Activated CD8-positive, alpha-beta T cell treated with anti-CD3 and anti-CD28 coated beads, Interleukin-2, amount 10 ng/mL, durations not matched to agents 7 days and 5 days (primary cell): ENCODE measurements at regions of chr10 and their contacts with region 1.

Region 1: GRCh38 chr10:71696628-71697326 is 22.8 kb downstream of the C10orf105 start:
- DNase-seq: peak; percentile 72
- ATAC-seq: peak; percentile 67
- H3K4me3 Mint-ChIP-seq: no peak overlapping the region
- H3K27ac Mint-ChIP-seq: peak overlapping the region; percentile 52
- H3K4me1 Mint-ChIP-seq: peaks cover 68% of the 10 kb centered on the region
- H3K27me3 Mint-ChIP-seq: no peaks in the 10 kb centered on the region

Region 2: DNA sequence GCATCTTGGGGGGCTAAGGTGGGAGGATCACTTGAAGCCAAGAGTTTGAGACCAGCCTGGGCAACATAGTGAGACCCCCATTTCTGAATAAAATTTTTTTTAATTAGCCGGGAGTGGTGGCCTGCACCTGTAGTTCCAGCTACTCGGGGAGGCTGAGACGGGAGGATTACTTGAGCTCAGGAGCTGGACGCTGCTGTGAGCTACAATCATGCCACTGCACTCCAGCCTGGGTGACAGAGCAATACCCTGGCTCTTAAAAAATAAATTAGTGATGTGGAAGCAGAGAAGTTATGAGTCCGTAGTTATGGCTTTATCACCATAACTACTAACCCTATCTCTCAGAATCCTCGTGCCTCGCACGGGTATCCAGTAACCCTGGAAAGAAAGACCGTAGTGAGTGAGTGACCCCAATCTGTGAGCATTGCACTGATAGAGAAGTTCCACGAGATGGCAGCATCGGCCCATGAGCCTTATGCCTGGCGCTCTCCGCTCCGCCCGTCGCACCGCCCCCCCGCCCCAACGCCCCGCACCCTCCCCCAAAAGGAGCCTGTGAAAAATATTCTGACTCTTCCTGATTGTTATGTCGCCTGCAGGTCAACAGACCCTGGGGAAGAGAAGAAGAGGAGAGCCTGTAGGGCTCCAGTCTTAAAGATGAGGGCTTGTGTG is 382.6 kb before region 1 on chr10:
- CTCF ChIA-PET with region 1: interaction called, 29 read pairs
- POLR2A ChIA-PET with region 1: no interaction called
- DNase-seq: peak; percentile 58
- ATAC-seq: peak; percentile 23
- H3K4me3 Mint-ChIP-seq: no peak overlapping the region
- H3K27ac Mint-ChIP-seq: no peak overlapping the region
- H3K4me1 Mint-ChIP-seq: peaks cover 19% of the 10 kb centered on the region
- H3K27me3 Mint-ChIP-seq: peaks cover 8% of the 10 kb centered on the region

Region 3: GRCh38 chr10:71383972-71384687 is 312.6 kb before region 1 on chr10:
- CTCF ChIA-PET with region 1: interaction called, 10 read pairs
- POLR2A ChIA-PET with region 1: no interaction called
- DNase-seq: peak; percentile 77
- ATAC-seq: peak; percentile 95
- H3K4me3 Mint-ChIP-seq: no peak overlapping the region
- H3K27ac Mint-ChIP-seq: no peak overlapping the region
- H3K4me1 Mint-ChIP-seq: no peaks in the 10 kb centered on the region
- H3K27me3 Mint-ChIP-seq: peaks cover 9% of the 10 kb centered on the region

Region 4: GRCh38 chr10:71708301-71708703 is 11.5 kb after region 1 on chr10:
- CTCF ChIA-PET with region 1: interaction called, 121 read pairs
- POLR2A ChIA-PET with region 1: interaction called, 5 read pairs
- DNase-seq: peak; percentile 68
- ATAC-seq: peak; percentile 42
- H3K4me3 Mint-ChIP-seq: no peak overlapping the region
- H3K27ac Mint-ChIP-seq: peak overlapping the region; percentile 55
- H3K4me1 Mint-ChIP-seq: peaks cover 55% of the 10 kb centered on the region
- H3K27me3 Mint-ChIP-seq: no peaks in the 10 kb centered on the region

Region 5: DNA sequence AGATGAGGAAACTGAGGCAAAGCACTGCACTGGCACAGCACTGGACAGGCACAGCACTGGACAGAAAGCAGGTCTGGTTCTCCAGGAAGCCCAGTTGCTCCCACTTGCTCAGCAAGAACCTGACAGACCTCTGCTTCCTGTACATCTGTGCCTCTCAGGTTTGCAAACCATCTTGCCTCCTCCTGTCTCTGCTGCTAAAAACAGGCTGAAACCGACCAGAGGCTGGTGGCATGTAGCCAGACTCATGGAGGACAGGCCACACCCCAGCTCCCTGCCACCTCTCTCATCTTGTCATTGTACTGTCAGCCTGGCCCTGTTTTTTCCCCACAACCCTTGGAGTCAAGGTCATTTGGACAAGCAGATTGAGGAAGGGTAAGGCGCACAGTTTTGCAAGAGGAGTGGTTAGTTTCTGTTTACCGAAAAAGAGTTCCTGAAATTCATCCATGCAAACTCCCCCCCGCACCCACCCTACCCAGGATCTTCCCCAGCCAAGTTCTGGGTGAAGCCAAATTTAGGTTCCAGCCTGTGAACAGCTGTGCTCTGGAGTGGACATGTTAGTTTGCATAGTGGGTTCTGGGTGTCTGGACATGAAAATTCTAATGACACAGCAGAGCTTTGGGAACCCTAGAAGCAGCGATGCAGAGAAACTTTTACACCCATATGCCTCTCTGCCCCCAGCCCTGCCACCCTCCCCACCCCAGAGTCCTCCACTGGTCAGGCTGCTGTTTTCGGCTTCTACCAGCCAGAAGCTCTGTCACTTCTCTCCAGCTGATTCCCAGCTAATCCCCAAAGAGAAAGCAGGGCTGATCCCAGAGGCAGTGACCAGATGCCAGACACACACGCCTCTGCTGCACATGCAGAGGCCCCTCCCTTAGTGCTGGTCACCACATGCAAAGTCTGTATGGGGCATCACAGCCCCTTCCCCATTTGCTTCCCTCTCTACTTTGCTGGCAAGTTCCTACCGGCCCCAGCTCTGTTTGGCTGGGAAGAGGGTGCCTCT is 31.3 kb after region 1 on chr10:
- CTCF ChIA-PET with region 1: interaction called, 38 read pairs
- POLR2A ChIA-PET with region 1: interaction called, 4 read pairs
- DNase-seq: peak; percentile 83
- ATAC-seq: peak; percentile 50
- H3K4me3 Mint-ChIP-seq: peak overlapping the region; percentile 71
- H3K27ac Mint-ChIP-seq: peak overlapping the region; percentile 98
- H3K4me1 Mint-ChIP-seq: peaks cover 98% of the 10 kb centered on the region
- H3K27me3 Mint-ChIP-seq: no peaks in the 10 kb centered on the region

Region 6: GRCh38 chr10:71756311-71757191 is 59.8 kb after region 1 on chr10:
- CTCF ChIA-PET with region 1: interaction called, 24 read pairs
- POLR2A ChIA-PET with region 1: interaction called, 3 read pairs
- DNase-seq: no peak
- ATAC-seq: peak; percentile 53
- H3K4me3 Mint-ChIP-seq: peak overlapping the region; percentile 57
- H3K27ac Mint-ChIP-seq: peak overlapping the region; percentile 91
- H3K4me1 Mint-ChIP-seq: peaks cover 86% of the 10 kb centered on the region
- H3K27me3 Mint-ChIP-seq: no peaks in the 10 kb centered on the region

Region 7: DNA sequence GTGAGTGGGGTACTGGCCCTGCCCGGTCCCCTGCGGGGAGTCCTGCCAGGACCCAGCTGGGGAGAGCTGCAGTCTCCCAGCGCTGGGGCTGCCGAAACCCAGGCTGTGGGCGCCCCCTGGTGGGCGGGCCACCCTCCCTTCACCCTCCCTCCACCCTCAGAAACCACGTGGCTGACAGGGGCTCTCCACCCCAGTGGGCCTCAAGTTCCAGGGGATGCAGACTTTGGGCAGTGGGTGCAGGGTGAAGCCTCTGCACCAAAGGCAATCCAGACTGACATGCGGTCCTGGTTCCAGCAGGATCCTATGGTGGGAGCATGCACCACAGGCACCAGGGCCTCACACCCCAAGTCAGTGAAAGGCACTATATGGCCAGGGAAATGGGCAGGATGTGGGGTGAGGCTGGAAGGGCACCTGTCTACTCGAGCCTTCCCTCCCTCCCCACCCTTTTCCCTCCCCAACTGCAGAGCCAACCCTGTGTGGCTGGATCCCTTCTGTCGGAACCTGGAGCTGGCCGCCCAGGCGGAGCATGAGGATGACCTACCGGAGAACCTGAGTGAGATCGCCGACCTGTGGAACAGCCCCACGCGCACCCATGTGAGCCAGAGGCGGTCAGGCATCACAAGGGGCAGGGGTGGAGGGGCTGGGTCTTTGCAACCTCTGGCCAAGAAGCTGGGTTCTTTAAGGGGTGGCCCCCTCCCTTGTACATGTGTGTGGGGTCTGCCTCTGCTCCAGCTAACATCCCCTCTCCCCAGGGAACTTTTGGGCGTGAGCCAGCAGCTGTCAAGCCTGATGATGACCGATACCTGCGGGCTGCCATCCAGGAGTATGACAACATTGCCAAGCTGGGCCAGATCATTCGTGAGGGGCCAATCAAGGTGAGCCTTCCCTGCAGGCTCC is 115.5 kb after region 1 on chr10:
- CTCF ChIA-PET with region 1: interaction called, 40 read pairs
- POLR2A ChIA-PET with region 1: no interaction called
- DNase-seq: peak; percentile 87
- ATAC-seq: peak; percentile 97
- H3K4me3 Mint-ChIP-seq: no peak overlapping the region
- H3K27ac Mint-ChIP-seq: peak overlapping the region; percentile 51
- H3K4me1 Mint-ChIP-seq: peaks cover 21% of the 10 kb centered on the region
- H3K27me3 Mint-ChIP-seq: no peaks in the 10 kb centered on the region